HEK293 (cell line): ENCODE measurements at regions of chr5 and their contacts with region 1.

Region 1: GRCh38 chr5:177497292-177498033 is at the start of gene PDLIM7:
- H3K4me3 ChIP-seq: peak within 1 kb of the TSS; percentile 67
- H3K27ac ChIP-seq: peak within 1 kb of the TSS; percentile 98
- H3K4me1 ChIP-seq: peaks cover 20% of the 10 kb centered on the region
- CTCF ChIP-seq: peak; percentile 27

Region 2: GRCh38 chr5:177390363-177391300 is 106.8 kb before region 1 on chr5:
- CTCF ChIA-PET with region 1: interaction called, 40 read pairs
- POLR2A ChIA-PET with region 1: interaction called, 9 read pairs
- H3K4me3 ChIP-seq: no peak overlapping the region
- H3K27ac ChIP-seq: no peak overlapping the region
- H3K4me1 ChIP-seq: no peaks in the 10 kb centered on the region
- CTCF ChIP-seq: peak; percentile 94

Region 3: DNA sequence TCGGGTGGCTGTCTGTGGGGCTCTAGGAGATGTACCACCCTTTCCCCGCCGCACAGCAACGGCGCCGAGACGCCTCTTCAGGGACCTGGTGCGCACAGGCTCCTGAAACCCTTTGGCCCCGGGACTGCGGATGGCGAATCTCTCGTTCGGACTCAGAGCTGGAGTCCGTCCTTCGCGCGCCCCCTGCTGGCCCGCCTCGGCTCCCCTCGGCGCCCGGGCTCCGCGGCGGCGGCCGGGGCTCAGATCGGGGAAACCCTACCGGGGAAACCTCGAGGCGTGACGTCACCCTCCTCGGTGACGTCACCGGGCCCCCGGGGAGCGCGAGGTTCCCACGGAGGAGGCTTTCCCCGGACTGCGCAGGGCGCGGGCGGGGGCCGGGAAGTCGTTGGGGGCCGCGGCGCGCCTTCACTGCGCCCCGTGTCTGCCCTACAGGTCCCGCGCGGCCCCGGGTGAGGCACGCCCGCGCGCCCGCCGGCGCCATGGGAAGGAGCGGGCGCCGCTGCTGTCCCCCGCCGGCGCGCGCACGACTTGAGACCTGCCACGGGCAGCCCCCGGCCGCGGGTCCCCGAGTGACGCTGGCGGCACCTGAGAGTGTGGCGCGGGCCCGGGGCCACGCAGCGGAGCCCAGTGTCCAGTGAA is 42.9 kb before region 1 on chr5:
- CTCF ChIA-PET with region 1: interaction called, 23 read pairs
- POLR2A ChIA-PET with region 1: interaction called, 89 read pairs
- H3K4me3 ChIP-seq: peak overlapping the region; percentile 69
- H3K27ac ChIP-seq: peak overlapping the region; percentile 89
- H3K4me1 ChIP-seq: peaks cover 8% of the 10 kb centered on the region
- CTCF ChIP-seq: peak; percentile 90

Region 4: GRCh38 chr5:177478711-177479646 is 18.5 kb before region 1 on chr5:
- CTCF ChIA-PET with region 1: interaction called, 11 read pairs
- POLR2A ChIA-PET with region 1: interaction called, 106 read pairs
- H3K4me3 ChIP-seq: no peak overlapping the region
- H3K27ac ChIP-seq: no peak overlapping the region
- H3K4me1 ChIP-seq: no peaks in the 10 kb centered on the region; the same call in 1 of the 2 replicates
- CTCF ChIP-seq: no peak

Region 5: DNA sequence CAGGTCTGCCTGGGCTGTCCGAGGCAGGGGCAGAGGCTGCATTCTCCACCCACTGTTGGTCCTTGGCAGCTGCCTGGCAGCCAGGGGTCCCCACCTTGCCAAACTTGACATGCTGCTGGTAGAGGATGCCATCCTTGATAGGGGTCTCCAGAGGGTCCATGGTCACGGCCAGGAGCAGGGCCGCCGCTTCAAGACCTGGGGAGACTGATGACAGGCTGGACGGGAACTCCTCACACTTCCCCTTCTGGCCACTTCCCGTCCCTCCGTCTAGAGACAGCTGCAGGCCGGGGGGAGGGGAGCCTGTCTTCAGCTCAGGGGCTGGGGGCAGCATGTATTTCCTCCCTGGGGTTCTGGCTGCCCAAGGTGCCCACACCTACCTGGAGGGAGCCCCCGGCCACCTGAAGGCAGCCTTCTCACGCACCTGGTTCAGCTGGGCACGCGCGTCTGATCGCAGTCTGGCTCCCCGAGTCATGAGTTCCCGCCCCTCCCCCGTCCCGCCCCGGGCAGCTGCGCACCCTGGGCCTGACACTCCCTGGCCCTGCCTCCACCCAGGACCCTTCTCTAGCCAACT is 12.0 kb after region 1 on chr5 and contains the start of gene DOK3:
- CTCF ChIA-PET with region 1: interaction called, 16 read pairs
- POLR2A ChIA-PET with region 1: interaction called, 18 read pairs
- H3K4me3 ChIP-seq: no peak within 1 kb of the TSS
- H3K27ac ChIP-seq: no peak within 1 kb of the TSS
- H3K4me1 ChIP-seq: no peaks in the 10 kb centered on the region
- CTCF ChIP-seq: no peak